HCT116 (cell line): ENCODE measurements at regions of chr9 and their contacts with region 1.

Region 1: DNA sequence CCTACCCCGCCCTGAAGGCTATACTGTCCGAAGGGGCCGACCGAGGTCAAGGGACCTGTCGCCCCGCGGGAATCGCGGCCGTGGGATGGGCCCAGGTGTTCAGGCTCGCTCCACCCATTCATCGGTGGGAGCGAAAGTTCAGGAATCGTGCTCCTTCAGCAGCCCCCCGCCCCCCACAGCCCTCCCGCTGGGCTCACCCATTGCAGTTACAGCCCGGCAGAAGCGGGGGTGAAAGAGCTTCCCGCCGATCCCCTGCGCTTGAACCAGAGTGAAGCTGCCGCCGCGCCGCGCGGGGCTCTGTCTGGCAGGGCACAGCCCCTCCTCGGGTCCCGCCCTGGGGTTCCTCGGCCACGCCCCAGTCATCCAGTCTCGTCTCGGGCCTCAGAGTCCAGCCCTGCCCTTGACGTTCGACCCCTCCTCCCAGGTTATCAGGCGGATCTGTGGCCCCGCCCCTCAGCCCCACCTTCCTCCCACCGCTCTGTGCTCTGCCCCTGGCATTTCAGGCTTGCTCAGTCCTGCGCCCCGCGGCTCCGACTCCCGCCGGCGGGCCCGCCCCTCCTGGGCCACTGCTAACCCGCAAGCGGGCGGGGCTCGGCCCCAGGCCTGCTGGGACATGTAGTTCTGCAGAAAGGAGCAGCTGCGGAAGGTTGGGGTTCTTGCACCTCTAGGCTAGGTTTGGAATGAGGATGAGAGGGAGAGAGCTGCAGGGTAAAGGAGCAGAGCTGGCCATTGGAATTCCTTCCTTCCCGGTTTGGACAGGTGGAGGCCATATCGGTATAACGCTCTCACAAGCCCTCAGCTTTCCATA is at the start of gene MYORG:
- DNase-seq: peak; percentile 94
- ATAC-seq: peak; percentile 84
- H3K4me3 ChIP-seq: peak within 1 kb of the TSS; percentile 72 to 84
- H3K27ac ChIP-seq: peak within 1 kb of the TSS; percentile 46
- H3K4me1 ChIP-seq: peaks cover 31 to 50% of the 10 kb centered on the region in 2 experiments
- H3K27me3 ChIP-seq: no peaks in the 10 kb centered on the region
- CTCF ChIP-seq: no peak
- POLR2A ChIP-seq: peak; percentile 29
- RAD21 ChIP-seq: no peak
- total RNA-seq, gene MYORG: 8.5 TPM

Region 2: DNA sequence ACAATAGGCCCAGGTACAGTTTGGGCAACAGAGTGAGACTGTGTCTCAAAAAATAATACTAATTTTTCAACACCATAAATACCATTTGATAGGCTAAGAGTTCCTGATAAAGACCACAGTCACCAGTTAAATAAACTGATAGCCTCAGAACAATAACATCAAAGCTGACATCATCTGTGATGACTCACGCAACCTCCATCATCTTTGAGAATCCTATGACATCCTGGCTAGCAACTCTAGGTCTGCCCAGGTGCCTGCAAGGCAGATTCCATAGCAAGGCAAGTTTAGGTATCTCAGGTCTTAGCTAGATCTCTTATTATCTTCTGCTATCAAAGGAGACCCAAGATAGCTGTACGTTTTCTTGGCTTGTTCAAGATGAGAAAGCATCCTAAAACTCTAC is 297.6 kb before region 1 on chr9:
- CTCF ChIA-PET with region 1: no interaction called
- POLR2A ChIA-PET with region 1: no interaction called
- RAD21 ChIA-PET with region 1: no interaction called
- intact Hi-C with region 1: no loop called
- DNase-seq: peak; percentile 13
- ATAC-seq: peak; percentile 29; the same call in 1 of the 2 replicates
- H3K4me3 ChIP-seq: no peak overlapping the region
- H3K27ac ChIP-seq: no peak overlapping the region
- H3K4me1 ChIP-seq: peaks cover 0 to 11% of the 10 kb centered on the region in 2 experiments; a peak in 2 of 4 replicates
- H3K27me3 ChIP-seq: no peaks in the 10 kb centered on the region
- CTCF ChIP-seq: no peak
- POLR2A ChIP-seq: no peak
- RAD21 ChIP-seq: no peak

Region 3: GRCh38 chr9:34126207-34127034 is 250.4 kb before region 1 on chr9 and contains the start of gene DCAF12:
- CTCF ChIA-PET with region 1: no interaction called
- POLR2A ChIA-PET with region 1: no interaction called
- RAD21 ChIA-PET with region 1: no interaction called
- intact Hi-C with region 1: loop called (anchors 5 kb)
- DNase-seq: peak; percentile 78
- ATAC-seq: peak; percentile 93
- H3K4me3 ChIP-seq: peak within 1 kb of the TSS; percentile 63 to 85
- H3K27ac ChIP-seq: peak within 1 kb of the TSS; percentile 86
- H3K4me1 ChIP-seq: peaks cover 10 to 12% of the 10 kb centered on the region in 2 experiments
- H3K27me3 ChIP-seq: no peaks in the 10 kb centered on the region
- CTCF ChIP-seq: no peak
- POLR2A ChIP-seq: peak; percentile 14
- RAD21 ChIP-seq: no peak; the same call in 1 of the 2 replicates
- total RNA-seq, gene DCAF12: 40.2 TPM

Region 4: GRCh38 chr9:34178520-34179212 is 198.1 kb before region 1 on chr9 and contains the start of gene UBAP1:
- CTCF ChIA-PET with region 1: no interaction called
- POLR2A ChIA-PET with region 1: no interaction called
- RAD21 ChIA-PET with region 1: no interaction called
- intact Hi-C with region 1: loop called (anchors 5 kb)
- DNase-seq: peak; percentile 93
- ATAC-seq: peak; percentile 94
- H3K4me3 ChIP-seq: peak within 1 kb of the TSS; percentile 79 to 98
- H3K27ac ChIP-seq: peak within 1 kb of the TSS; percentile 62
- H3K4me1 ChIP-seq: peaks cover 11 to 36% of the 10 kb centered on the region in 2 experiments
- H3K27me3 ChIP-seq: no peaks in the 10 kb centered on the region
- CTCF ChIP-seq: no peak
- POLR2A ChIP-seq: peak; percentile 87
- RAD21 ChIP-seq: no peak
- total RNA-seq, gene UBAP1: 30.8 TPM

Region 5: GRCh38 chr9:34252670-34253459 is 123.9 kb before region 1 on chr9:
- CTCF ChIA-PET with region 1: interaction called, 3 read pairs
- POLR2A ChIA-PET with region 1: interaction called, 3 read pairs
- RAD21 ChIA-PET with region 1: no interaction called
- intact Hi-C with region 1: loop called (anchors 5 kb)
- DNase-seq: peak; percentile 18
- ATAC-seq: peak; percentile 82
- H3K4me3 ChIP-seq: no peak overlapping the region
- H3K27ac ChIP-seq: no peak overlapping the region
- H3K4me1 ChIP-seq: peaks cover 0 to 26% of the 10 kb centered on the region in 2 experiments; a peak in 2 of 4 replicates
- H3K27me3 ChIP-seq: no peaks in the 10 kb centered on the region
- CTCF ChIP-seq: peak; percentile 37 to 97 (median 96); a peak in 5 of 6 replicates
- POLR2A ChIP-seq: no peak
- RAD21 ChIP-seq: peak; percentile 68

Region 6: DNA sequence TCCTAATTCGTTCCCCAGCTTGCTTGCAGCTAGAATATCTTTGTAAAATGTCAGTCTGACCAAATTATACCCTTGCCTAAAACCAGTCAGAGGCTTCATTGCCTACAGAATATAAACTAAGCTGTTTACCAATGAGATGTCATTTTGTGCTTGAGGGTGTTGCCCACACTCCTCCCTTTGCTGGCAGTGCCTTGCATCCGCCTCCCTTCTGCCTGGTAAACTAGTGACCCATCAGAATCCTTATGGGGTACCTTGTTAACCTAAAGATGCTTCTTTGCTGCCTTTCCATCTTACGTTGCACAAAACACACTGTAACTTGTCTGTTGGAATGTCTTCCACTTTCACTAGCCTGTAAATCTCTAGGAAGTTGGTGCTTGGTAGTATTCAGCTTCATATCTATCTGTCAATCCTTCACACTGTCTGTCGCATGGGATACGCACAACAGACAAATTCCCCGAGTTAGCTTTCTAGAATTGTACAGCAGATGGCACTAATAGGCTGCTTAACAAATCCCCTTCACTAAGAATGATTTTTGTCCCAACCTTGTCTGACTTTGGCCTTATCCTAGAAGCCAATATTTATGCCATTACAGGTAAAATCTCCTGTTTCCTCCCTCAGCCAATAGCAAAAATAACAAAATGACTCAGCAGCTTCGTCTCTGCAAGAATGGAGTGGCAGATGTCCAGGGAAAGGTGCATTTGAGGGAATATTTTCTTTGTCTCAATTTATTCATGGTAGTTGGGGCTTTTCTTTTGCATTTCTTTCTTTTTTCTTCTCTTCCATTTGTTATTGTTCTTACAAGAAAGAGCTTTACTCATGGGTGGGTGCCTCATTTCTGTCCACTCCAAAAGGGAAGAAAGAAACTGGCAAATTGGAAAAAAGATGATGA is 44.5 kb before region 1 on chr9:
- CTCF ChIA-PET with region 1: interaction called, 54 read pairs
- POLR2A ChIA-PET with region 1: interaction called, 5 read pairs
- RAD21 ChIA-PET with region 1: no interaction called
- intact Hi-C with region 1: loop called (anchors 1 kb)
- DNase-seq: peak; percentile 28
- ATAC-seq: no peak
- H3K4me3 ChIP-seq: no peak overlapping the region
- H3K27ac ChIP-seq: no peak overlapping the region
- H3K4me1 ChIP-seq: peaks cover 8 to 23% of the 10 kb centered on the region in 2 experiments; a peak in 3 of 4 replicates
- H3K27me3 ChIP-seq: no peaks in the 10 kb centered on the region
- CTCF ChIP-seq: peak; percentile 40 to 71 (median 58)
- POLR2A ChIP-seq: no peak
- RAD21 ChIP-seq: peak; percentile 81

Region 7: GRCh38 chr9:34403554-34404380 is 27.0 kb after region 1 on chr9:
- CTCF ChIA-PET with region 1: interaction called, 13 read pairs
- POLR2A ChIA-PET with region 1: no interaction called
- RAD21 ChIA-PET with region 1: no interaction called
- intact Hi-C with region 1: no loop called
- DNase-seq: peak; percentile 39
- ATAC-seq: peak; percentile 83
- H3K4me3 ChIP-seq: no peak overlapping the region
- H3K27ac ChIP-seq: no peak overlapping the region
- H3K4me1 ChIP-seq: 0 out of 4 replicates have a peak, but pooled peaks cover 0 to 4% of the 10 kb centered on the region in 2 experiments
- H3K27me3 ChIP-seq: no peaks in the 10 kb centered on the region
- CTCF ChIP-seq: peak; percentile 95 to 99 (median 99)
- POLR2A ChIP-seq: no peak
- RAD21 ChIP-seq: peak; percentile 81